ENCODE measurements at regions of chr4 and their contacts with region 1.

Region 1: DNA sequence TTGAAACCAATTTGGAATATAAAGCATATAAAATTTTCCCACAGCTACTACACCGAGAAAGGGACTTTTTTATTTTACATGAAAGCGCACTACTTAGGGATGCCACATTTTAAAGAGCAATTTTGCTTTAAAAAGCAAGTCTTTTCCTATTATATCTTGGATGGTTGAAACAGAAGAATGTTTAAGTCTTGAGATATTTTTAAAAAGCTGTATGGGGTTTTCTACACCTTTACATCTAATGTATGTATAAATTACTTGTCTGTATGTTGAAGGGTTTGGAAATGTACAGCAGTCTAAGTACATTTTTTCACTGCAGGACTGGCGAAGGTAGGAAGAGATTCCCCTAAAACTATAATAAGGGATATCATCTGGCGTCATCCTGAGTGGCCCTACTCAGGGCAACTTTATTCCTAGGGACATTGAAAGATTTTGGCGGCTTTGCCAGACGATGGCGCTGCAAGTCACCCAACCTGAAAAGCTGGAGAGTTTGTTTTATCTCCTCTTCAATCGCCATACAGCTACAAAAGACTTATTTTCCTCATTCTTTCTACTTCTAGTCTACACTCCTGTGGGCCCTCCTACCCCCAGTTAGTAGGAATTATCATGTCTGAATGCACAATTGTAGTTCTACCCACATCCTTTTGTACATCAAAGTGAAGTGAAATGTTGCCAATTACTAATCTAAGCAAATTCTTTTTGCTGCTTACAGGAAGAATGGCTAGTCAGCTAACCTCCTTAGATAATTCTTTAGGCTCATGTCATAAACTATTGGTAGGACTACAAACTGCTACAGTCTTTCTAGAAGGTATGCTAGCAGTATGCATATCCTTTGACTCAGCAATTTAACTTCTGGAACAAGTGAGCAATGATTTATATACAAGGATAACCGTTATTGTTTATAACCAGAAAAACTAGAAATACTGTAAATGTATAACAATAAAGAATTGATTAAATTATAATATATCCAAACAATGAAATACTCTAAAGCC is 782 bp upstream of the NEK1 start:
- DNase-seq: peak; percentile 68 to 96 (median 79)

Region 2: GRCh38 chr4:168797176-168797575 is 816.0 kb before region 1 on chr4:
- intact Hi-C with region 1: no loop called
- DNase-seq: no peak

Region 3: DNA sequence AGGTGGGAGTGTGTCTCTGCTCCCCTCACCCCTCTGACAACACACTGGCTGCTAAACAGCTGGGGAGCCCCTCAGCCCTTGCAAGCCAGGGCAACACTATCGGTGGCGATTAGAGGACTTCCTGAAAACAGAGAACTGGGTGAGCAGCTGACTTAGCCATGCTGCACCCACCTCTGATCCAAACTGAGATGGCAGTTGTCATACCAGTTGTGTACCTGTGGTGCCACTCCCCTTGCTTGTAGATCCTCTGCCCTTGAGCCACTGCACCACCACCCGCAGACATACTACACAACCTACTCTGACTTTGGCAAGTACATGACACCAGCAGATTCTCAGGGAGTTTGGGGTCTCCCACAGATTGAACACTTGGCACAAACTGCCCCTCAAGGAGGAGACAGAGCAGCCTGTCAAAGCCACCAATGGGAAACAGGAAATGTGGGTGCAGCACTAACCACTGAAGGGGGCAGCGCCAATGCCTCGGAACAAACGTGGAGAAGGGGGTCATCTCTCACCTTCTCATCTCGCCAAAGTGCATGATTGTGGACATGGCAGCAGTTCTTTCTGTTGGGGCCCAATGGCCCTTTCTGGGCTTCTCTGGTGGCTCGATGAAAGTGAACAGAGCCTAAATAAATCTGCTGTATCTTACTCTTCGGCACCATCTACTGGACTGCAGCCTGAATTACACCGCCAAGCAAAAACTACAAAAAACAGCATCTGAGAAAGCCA is 120.6 kb before region 1 on chr4:
- intact Hi-C with region 1: no loop called
- DNase-seq: peak in 1 of 10 donors; percentile 54

Region 4: DNA sequence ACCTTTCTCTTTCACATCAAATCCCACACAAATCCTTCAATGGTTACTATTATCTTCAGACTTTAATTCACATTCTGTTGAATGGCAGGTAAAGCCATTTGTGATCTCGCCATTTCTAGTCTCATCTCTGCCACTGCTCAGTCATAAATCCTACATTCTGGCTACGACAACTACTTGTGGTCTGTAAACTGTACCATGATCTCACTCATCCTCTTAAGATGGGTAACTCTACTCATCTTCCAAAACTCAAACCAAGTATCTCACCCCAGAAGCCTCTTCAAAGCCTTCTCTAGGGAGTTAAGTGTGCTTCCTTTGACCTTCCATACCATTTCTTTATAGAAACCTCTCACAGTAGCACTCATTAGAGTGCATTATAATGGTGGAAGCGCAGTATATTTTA is 102.5 kb before region 1 on chr4:
- intact Hi-C with region 1: no loop called
- DNase-seq: no peak

Region 5: GRCh38 chr4:169723207-169723965 is 110.2 kb after region 1 on chr4:
- intact Hi-C with region 1: loop called (anchors 5 kb)
- DNase-seq: no peak

Region 6: DNA sequence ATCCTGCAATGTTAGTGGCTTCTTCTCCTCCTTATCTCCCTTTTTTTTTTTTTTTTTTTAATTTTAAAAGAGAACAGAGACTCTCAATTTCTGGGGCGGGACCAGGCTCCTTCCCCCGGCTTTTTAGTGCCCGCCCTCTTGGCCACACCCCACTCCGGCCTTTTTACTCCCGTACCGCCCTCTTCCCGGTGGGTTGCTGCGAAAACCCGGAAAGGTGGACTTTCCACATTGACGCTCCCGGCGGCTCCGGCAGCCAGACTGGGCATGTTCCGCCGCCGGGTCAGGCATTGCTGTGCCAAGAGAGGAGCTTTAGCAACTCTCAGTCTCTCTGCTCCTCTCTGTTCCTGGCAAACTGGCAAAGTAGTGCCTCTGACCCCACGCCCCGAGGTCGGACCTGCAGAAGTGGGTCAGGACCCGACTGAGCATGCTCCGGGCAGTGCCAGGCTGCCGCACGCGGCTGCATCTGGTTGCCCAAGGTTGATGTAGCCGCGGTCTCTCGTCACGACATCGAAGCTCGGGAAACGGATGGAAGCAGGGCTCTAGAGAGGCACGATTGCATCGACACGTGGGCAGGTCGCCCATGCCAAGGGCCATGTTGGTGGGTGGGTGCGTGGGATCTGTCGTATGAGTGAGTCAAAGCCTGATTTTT is 414.1 kb after region 1 on chr4:
- intact Hi-C with region 1: loop called (anchors 5 kb)
- DNase-seq: peak; percentile 87 to 98 (median 93)

Region 7: DNA sequence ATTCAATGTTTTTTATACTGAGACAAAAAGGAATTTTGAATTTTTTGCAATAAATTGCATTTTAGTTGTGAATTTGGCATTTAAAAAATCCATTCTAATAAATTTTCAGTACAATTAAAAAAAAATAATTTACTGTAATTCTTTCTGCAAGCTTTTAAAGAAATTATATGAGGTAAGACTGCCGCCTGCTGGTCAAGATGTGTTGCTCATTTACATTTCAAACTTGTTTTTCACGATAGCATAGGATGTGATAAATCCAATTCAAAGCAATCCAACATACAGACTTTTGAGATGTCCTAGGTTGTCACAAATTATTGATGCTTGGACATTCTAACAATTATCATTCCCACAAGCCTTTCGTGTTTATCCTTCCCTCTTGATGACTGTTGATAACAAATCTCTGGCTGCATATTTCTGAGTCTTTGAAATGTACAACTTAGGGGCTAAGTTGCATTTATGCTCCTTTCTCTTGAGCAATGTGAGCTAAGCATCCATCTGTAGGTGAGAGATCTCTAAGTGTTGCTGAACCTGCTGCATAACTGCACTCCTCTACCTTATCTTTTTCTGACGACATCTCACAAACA is 434.7 kb after region 1 on chr4:
- intact Hi-C with region 1: loop called (anchors 2 kb)
- DNase-seq: peak in 6 of 10 donors; percentile 48 to 86 (median 57)

Region 8: DNA sequence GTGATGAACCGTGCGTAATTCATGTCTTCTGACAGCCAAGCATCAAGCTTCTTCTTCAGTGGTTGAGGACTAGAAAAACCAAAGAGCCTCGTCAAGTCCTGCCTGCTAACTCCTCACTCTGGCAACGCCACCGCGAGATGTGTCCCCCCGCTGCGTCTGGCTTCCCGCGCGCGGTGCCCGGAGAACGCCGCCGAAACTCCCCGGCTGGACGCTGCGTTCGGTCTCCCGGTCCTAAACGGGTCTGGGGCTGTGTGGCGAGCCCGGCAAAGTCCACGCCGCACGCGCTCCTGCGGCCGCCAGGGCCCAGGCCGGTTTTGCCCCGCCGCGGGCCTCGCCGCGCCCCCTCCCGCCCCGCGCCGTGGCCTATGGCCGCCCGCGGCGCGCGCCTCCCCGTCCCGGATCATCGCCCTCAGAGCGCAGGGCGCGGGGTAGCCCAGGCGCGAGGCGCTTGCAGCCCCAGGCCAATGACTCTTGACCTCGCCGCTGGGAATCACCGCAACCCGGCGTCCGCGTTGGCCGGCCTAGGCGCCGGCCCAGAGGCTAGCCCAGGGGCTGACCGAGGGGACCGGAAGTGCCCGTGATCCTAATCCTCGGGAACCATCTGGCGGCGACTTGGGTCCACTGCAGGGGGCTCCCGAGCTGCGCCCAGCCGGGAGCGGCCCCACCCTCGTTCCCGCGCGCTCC is 476.6 kb after region 1 on chr4 and contains the start of gene AADAT:
- intact Hi-C with region 1: loop called (anchors 2 kb)
- DNase-seq: peak; percentile 72 to 97 (median 82)